ENCODE measurements at regions of chr2 and their contacts with region 1.

Region 1: DNA sequence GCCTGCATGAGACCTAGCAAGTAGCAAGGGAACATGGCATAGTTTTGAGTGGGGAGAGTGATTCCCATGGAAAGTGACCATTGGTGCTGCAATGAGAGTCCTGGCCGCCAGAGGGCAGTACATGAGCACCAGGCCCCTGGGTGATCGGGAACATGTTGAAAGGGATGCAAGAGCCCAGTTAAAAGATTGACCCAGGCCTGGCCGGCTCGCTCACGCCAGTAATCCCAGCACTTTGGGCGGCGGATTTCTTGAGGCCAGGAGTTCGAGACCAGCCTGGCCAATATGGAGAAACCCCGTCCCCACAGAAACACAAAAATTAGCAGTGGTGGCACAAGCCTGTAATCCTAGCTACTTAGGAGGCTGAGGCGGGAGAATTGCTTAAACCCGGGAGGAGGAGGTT is 22.2 kb downstream of the FAP start:
- DNase-seq: peak; percentile 82
- H3K4me3 Mint-ChIP-seq: no peak overlapping the region
- H3K27ac Mint-ChIP-seq: no peak overlapping the region
- H3K4me1 Mint-ChIP-seq: peaks cover 9% of the 10 kb centered on the region
- H3K27me3 Mint-ChIP-seq: no peaks in the 10 kb centered on the region
- CTCF ChIP-seq: peak; percentile 97

Region 2: DNA sequence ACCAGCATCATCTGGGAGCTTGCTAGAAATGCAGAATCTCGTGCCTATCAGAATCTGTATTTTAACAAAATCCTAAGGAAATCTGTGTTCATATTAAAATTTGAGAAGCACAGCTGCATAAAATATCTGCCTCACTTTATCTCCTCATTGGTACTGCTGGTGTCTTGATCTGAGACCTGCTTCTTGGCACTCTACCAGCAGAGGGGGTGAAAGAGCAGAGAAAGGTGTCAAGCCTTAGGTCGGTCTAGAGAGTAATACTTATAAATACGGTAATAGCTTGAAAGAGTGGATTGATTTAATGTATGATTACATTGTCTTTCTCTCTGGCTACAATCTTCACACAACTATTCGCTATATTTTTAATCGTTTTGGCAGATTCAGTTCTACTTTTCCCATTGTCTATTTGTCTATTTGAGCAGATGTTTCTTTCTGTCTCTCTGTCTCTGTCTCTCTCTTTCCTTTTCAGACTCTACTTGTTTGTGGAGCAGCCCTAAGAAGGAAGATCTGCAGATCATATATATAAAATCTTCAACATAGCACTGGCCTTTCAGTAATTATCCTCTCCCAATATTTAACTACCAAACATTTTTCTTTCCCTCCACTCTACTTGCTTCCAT is 67.3 kb before region 1 on chr2:
- CTCF ChIA-PET with region 1: interaction called, 37 read pairs
- POLR2A ChIA-PET with region 1: no interaction called
- intact Hi-C with region 1: loop called (anchors 1 kb)
- DNase-seq: peak; percentile 87
- H3K4me3 Mint-ChIP-seq: no peak overlapping the region
- H3K27ac Mint-ChIP-seq: no peak overlapping the region
- H3K4me1 Mint-ChIP-seq: peaks cover 7% of the 10 kb centered on the region
- H3K27me3 Mint-ChIP-seq: peaks cover 34% of the 10 kb centered on the region
- CTCF ChIP-seq: peak; percentile 55

Region 3: DNA sequence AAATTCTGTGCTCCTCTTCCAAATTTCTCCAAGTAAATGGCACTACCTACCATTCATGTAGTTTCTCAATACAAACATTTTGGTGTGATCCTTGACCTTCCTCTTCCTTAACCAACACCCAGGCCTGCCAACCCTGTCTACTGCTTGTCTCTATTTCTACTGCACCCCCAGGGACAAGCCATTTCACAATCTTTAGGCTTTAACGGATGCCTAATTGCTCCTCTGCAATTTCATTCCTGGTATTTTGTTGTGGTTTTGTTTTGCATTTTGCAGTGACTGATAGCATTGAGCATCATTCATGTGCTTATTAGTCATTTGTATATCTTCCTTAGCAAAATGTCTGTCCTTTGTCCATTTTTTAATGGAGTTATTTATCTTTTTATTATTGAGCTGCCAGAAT is 12.1 kb after region 1 on chr2:
- CTCF ChIA-PET with region 1: interaction called, 56 read pairs
- POLR2A ChIA-PET with region 1: no interaction called
- intact Hi-C with region 1: no loop called
- DNase-seq: peak; percentile 85
- H3K4me3 Mint-ChIP-seq: peak overlapping the region; percentile 4
- H3K27ac Mint-ChIP-seq: peak overlapping the region; percentile 84
- H3K4me1 Mint-ChIP-seq: peaks cover 21% of the 10 kb centered on the region
- H3K27me3 Mint-ChIP-seq: no peaks in the 10 kb centered on the region
- CTCF ChIP-seq: no peak

Region 4: DNA sequence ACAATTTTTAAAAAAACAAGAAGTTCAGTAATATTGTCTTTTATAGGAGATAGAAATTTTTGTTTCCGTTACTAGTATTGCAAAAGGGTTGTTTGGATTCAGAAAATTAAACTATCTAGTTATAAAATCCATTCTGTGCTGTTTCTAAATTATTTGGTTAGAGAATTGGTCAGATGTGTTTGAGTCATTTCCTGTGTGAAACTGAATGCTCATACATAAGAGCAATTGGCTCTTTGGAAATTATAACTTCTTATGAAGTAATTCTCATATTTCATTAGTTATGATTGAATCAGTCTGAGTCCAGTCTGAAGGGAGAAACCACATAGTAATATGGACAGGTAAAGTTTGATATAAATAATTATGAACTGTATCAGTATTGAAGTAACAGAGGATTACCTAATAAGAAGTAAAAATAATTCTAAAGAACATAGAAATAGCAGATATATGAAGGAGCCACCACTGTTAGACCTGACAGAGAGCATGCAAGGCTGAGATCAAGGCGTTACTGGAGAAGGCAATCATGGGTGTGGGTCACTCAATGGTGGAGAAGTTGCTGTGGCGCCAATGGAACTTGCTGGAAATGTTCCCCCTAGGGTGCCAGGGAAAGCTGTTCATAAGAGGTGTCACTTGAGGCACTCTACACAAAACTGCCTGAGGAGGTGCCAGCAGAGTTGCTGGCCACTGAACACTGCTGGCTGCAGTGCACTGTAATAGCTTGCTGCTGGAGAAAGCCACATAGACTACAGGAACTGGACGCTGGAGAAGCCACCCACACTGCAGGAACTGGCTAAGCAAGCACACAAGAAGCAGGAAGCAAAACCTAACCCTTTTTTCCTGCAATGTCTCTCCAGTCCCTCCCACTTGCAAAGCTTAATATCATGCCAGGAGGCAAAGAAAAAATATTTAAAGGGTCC is 40.2 kb after region 1 on chr2:
- CTCF ChIA-PET with region 1: interaction called, 10 read pairs
- POLR2A ChIA-PET with region 1: interaction called, 3 read pairs
- intact Hi-C with region 1: no loop called
- DNase-seq: peak; percentile 65
- H3K4me3 Mint-ChIP-seq: peak overlapping the region; percentile 30
- H3K27ac Mint-ChIP-seq: peak overlapping the region; percentile 69
- H3K4me1 Mint-ChIP-seq: peaks cover 35% of the 10 kb centered on the region
- H3K27me3 Mint-ChIP-seq: no peaks in the 10 kb centered on the region
- CTCF ChIP-seq: no peak

Region 5: DNA sequence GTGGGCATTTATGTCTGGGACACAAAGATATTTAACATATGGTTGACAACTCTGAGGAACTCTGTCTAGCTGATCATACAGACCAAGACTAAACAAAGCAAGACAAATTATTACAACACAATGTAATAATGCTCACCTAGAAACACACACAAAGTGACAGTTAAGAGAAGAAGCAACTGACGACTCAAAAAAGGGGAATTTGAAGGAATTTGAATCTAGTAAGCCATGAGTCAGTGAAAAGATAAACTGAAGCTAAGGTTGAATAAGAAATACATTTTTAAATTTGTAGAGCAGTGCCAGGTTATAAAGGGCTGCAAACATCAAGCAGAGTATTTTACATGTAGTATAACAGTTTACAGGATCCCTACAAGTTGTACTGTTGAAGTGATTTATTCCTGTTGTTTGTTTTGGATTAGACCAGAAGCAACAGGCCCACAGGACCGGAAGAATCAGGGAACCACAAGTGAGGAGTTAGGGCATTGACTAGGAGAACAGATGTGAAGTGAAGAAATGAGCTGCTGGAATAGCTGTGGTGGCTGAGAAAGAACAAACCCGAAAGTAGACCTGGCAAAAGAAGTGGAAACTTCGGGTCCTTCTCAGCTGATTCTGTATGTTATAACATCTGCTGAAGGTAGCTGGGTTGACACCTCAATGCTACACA is 61.8 kb after region 1 on chr2:
- CTCF ChIA-PET with region 1: interaction called, 639 read pairs
- POLR2A ChIA-PET with region 1: no interaction called
- intact Hi-C with region 1: no loop called
- DNase-seq: no peak
- H3K4me3 Mint-ChIP-seq: no peak overlapping the region
- H3K27ac Mint-ChIP-seq: no peak overlapping the region
- H3K4me1 Mint-ChIP-seq: no peaks in the 10 kb centered on the region
- H3K27me3 Mint-ChIP-seq: no peaks in the 10 kb centered on the region
- CTCF ChIP-seq: no peak

Region 6: DNA sequence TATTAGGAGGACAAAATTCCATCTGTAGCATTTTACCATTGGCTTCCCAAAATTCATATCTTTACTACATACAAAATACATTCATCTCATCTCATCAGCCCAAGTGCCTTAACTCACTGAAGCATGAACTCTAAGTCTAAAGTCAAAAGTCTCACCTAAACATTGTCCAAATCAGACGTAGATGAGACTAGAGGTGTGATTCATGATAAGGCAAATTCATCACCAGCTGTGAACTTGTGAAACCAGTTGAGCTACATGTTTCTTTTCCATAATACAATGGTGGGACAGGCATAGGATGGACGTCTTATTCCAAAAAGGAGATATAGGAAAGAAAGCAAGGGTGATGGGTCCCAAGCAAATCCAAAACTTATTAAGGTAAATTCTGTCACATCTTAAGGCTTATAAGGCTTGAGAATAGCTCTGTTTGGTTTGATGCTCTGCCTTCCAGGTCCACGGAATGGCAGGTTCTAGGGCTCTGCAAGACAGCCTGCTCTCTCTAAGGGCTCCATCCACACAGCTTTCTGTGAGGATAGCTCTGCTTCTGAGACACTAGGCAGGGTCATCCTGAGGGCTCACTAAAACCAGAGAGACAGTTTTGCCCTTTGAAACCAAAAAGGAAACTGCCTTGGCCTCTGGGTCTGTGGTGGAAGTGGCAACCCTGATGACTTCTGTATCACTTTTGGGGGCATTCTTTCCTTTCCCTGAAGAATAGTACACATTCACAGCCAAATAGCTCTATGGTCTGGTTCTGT is 87.9 kb after region 1 on chr2:
- CTCF ChIA-PET with region 1: interaction called, 639 read pairs
- POLR2A ChIA-PET with region 1: no interaction called
- intact Hi-C with region 1: no loop called
- DNase-seq: no peak
- H3K4me3 Mint-ChIP-seq: no peak overlapping the region
- H3K27ac Mint-ChIP-seq: no peak overlapping the region
- H3K4me1 Mint-ChIP-seq: no peaks in the 10 kb centered on the region
- H3K27me3 Mint-ChIP-seq: no peaks in the 10 kb centered on the region
- CTCF ChIP-seq: no peak

Measured in MCF 10A (cell line).